SK-N-SH (cell line): ENCODE measurements at regions of chr22 and their contacts with region 1.

Region 1: GRCh38 chr22:22884010-22884887 is 3.4 kb upstream of the IGLL5 start:
- DNase-seq: peak; percentile 79
- H3K4me3 ChIP-seq: no peak overlapping the region; a peak in 1 of 4 replicates
- H3K27ac ChIP-seq: no peak overlapping the region
- H3K4me1 ChIP-seq: peaks cover 0 to 33% of the 10 kb centered on the region in 2 experiments; a peak in 2 of 4 replicates
- H3K27me3 ChIP-seq: peaks cover 10% of the 10 kb centered on the region
- CTCF ChIP-seq: peak; percentile 59
- EP300 ChIP-seq: no peak
- RAD21 ChIP-seq: peak; percentile 91

Region 2: DNA sequence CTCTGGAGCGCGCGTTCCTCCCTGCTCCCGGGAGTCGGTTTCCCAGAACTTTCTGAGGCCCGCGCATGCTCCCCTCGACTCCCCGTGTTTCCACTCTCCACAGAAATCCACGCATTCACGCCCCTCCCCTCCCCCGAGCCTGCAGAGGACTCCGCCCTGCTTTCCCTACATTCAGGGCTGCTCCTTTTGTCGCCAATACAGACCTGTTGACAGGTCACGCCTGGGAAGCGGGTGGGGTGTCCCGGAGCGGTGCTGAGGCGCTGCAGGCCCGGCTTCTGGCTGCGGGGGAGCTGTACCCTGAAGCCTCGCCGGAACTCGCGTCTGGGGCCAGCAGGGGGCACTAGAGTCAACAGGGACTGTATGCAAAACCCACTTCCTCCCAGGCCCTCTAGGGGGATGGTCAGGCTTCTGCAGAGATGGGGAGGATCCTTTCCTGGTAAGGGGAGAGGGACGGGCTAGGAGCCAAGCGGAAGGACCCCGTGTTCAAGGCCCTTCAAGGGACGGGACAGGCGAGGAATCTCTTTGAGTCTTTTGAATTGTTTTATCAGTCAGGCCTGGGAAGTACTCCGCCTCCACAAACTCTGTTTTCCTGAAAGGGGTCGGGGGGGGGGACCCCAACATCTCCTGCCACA is 325.2 kb before region 1 on chr22 and contains the start of gene PRAME:
- CTCF ChIA-PET with region 1: interaction called, 10 read pairs
- POLR2A ChIA-PET with region 1: no interaction called
- DNase-seq: peak; percentile 88
- H3K4me3 ChIP-seq: peak within 1 kb of the TSS; percentile 58 to 92
- H3K27ac ChIP-seq: peak within 1 kb of the TSS; percentile 87 to 89
- H3K4me1 ChIP-seq: peaks cover 4 to 31% of the 10 kb centered on the region in 2 experiments; a peak in 3 of 4 replicates
- H3K27me3 ChIP-seq: no peaks in the 10 kb centered on the region
- CTCF ChIP-seq: peak; percentile 98
- EP300 ChIP-seq: peak; percentile 31 to 54; a peak in 1 of 4 replicates
- RAD21 ChIP-seq: peak; percentile 67
- polyA plus RNA-seq, gene PRAME: 193 and 241 TPM in 2 replicates

Region 3: DNA sequence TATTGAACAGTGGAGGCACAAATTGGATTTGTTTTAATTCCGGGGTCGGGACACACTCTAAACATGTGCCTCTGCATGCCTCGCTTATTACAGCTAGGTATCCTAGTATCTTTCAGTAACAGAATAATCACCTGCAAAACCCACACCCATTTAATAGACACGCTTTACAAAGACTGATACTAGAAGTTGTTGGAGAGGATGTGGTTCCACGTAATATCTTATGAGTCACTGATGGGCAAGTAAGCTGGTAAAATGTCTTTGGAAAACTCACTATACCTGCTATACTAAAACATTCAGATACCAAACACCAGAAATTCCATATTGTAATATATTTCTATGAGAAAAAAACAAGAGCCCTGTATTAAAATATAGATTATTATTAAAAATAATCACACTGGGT is 155.9 kb before region 1 on chr22:
- CTCF ChIA-PET with region 1: no interaction called
- POLR2A ChIA-PET with region 1: no interaction called
- DNase-seq: no peak
- H3K4me3 ChIP-seq: no peak overlapping the region
- H3K27ac ChIP-seq: no peak overlapping the region
- H3K4me1 ChIP-seq: no peaks in the 10 kb centered on the region
- H3K27me3 ChIP-seq: no peaks in the 10 kb centered on the region; the same call in 1 of the 2 replicates
- CTCF ChIP-seq: no peak
- EP300 ChIP-seq: no peak
- RAD21 ChIP-seq: no peak

Region 4: DNA sequence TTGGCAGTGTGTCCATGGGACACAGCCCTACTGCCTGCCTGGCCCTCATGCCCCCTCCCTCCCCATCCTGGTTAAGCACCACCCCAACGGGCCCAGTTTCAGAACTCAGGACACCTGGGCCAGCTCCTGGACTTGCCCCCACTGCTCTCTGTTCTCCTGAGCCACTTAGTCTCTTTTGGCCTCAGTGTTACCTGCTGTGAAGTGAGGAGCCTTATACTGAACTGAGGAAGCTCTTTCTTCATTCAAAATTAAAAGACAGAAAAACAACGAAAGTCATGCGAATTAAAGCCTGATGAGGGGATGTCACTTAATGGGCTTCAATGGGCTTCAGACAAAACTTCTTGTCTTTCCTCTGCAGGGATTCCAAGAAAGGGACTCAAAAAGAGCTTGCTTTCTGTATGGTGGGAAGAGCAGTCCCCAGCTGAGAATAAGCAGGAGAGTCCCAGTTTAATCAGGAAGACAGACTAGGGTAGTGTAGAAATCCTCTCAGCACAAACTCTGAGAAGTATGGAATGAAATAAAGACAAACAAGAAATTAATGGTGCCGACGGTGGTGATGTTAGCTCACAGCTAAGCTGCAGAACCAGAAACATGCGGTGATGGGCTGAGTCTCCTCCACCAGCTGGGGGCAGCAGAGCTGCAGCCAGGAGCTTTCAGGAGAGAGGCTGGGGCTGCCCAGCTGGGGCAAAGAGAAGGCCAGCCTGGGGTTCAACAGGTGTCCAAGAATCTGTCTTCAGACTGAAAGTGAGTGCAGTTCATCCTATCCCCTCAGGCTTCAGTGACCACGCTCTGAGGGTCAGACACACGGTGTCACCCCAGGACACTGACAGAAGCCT is 138.8 kb before region 1 on chr22:
- CTCF ChIA-PET with region 1: interaction called, 99 read pairs
- POLR2A ChIA-PET with region 1: no interaction called
- DNase-seq: peak; percentile 28
- H3K4me3 ChIP-seq: no peak overlapping the region
- H3K27ac ChIP-seq: no peak overlapping the region
- H3K4me1 ChIP-seq: no peaks in the 10 kb centered on the region
- H3K27me3 ChIP-seq: no peaks in the 10 kb centered on the region; the same call in 1 of the 2 replicates
- CTCF ChIP-seq: peak; percentile 56
- EP300 ChIP-seq: no peak
- RAD21 ChIP-seq: peak; percentile 52

Region 5: DNA sequence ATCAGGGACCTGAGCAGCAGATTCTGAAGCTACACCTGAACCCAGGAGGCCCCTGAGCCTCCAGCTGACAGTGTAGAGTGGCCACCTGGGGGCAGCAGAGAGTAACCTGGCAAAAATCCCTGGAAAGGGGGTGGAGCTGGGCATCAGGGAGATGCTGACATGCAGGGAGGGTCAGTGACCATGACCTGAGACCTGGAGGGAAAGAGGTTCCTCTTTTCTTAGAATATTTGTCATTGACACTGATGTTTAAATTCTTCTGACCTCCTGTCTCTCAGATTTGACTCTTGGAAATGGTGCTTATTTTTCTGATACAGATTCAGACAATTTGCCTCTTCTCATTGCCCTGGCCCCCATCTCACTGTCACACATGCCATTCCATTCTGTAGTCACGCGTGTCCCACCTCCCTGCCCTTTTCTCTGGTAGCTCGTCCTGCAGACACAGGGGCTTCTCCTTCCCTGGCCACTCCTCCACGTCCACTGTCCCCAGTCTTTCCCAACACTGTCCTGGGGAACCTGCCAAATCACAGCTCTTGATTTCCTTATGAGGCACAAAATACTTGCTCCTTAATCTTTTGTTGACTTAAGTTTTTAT is 113.9 kb before region 1 on chr22:
- CTCF ChIA-PET with region 1: interaction called, 32 read pairs
- POLR2A ChIA-PET with region 1: no interaction called
- DNase-seq: peak; percentile 66
- H3K4me3 ChIP-seq: no peak overlapping the region; a peak in 1 of 4 replicates
- H3K27ac ChIP-seq: no peak overlapping the region
- H3K4me1 ChIP-seq: no peaks in the 10 kb centered on the region; a peak in 1 of 4 replicates
- H3K27me3 ChIP-seq: no peaks in the 10 kb centered on the region; the same call in 1 of the 2 replicates
- CTCF ChIP-seq: peak; percentile 73
- EP300 ChIP-seq: no peak
- RAD21 ChIP-seq: no peak

Region 6: GRCh38 chr22:22848364-22848866 is 35.8 kb before region 1 on chr22:
- CTCF ChIA-PET with region 1: interaction called, 344 read pairs
- POLR2A ChIA-PET with region 1: no interaction called
- DNase-seq: peak; percentile 63
- H3K4me3 ChIP-seq: peak overlapping the region in 1 of 2 experiments; percentile 31; a peak in 1 of 4 replicates
- H3K27ac ChIP-seq: no peak overlapping the region
- H3K4me1 ChIP-seq: no peaks in the 10 kb centered on the region
- H3K27me3 ChIP-seq: no peaks in the 10 kb centered on the region; the same call in 1 of the 2 replicates
- CTCF ChIP-seq: peak; percentile 93
- EP300 ChIP-seq: no peak
- RAD21 ChIP-seq: peak; percentile 78

Region 7: GRCh38 chr22:22942511-22943329 is 58.5 kb after region 1 on chr22:
- CTCF ChIA-PET with region 1: interaction called, 15 read pairs
- POLR2A ChIA-PET with region 1: no interaction called
- DNase-seq: peak; percentile 80
- H3K4me3 ChIP-seq: no peak overlapping the region; a peak in 1 of 4 replicates
- H3K27ac ChIP-seq: no peak overlapping the region
- H3K4me1 ChIP-seq: peaks cover 0 to 8% of the 10 kb centered on the region in 2 experiments; a peak in 1 of 4 replicates
- H3K27me3 ChIP-seq: no peaks in the 10 kb centered on the region
- CTCF ChIP-seq: peak; percentile 74
- EP300 ChIP-seq: no peak
- RAD21 ChIP-seq: peak; percentile 60